Sigmoid colon (tissue), 7 donors: ENCODE measurements at regions of chr4 and their contacts with region 1.

Region 1: DNA sequence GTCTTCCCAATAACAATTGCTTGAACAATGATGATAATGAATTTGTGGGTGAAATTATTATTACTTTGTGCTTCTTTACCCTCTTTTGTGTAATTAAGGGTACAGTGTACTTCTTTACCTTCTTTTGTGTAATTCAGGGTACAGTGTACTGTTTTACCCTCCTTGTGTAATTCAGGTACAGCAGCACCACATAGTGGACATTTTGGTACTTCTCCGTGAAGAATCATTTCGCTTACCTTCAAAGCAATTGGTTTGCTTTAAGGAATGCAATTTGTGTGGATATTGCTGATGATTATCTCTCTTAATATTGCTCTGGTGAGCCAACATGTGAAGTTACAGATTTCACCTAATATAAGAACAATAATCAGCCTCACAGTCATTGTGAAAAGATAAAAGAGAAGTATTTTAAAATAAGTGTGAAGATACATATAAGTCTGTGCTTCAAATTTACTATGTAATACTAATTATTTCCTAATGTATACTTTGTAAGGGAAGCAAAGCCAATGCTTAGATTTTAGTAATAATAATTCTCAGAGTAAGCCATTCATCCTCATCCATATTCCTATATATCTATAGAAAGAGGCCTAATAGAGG is 27.2 kb upstream of the SEC24B start:
- DNase-seq: no peak
- H3K4me3 ChIP-seq: no peak overlapping the region
- H3K27ac ChIP-seq: no peak overlapping the region
- H3K4me1 ChIP-seq: no peaks in the 10 kb centered on the region
- H3K27me3 ChIP-seq: no peaks in the 10 kb centered on the region
- CTCF ChIP-seq: peak in 3 of 4 experiments; percentile 26 to 49 (median 29)
- EP300 ChIP-seq: no peak
- POLR2A ChIP-seq: no peak

Region 2: GRCh38 chr4:108683479-108683878 is 723.0 kb before region 1 on chr4:
- intact Hi-C with region 1: loop called (anchors 10 kb)
- DNase-seq: no peak
- H3K4me3 ChIP-seq: no peak overlapping the region
- H3K27ac ChIP-seq: no peak overlapping the region
- H3K4me1 ChIP-seq: no peaks in the 10 kb centered on the region
- H3K27me3 ChIP-seq: no peaks in the 10 kb centered on the region
- CTCF ChIP-seq: peak in 1 of 4 experiments; percentile 8
- EP300 ChIP-seq: no peak
- POLR2A ChIP-seq: no peak